ENCODE measurements at regions of chr13 and their contacts with region 1.

Region 1: GRCh38 chr13:48769107-48769704 is 115.5 kb downstream of the CYSLTR2 start:
- DNase-seq: peak; percentile 91
- ATAC-seq: peak; percentile 98
- H3K4me3 ChIP-seq: no peak overlapping the region
- H3K27ac ChIP-seq: no peak overlapping the region
- H3K4me1 ChIP-seq: peaks cover 8% of the 10 kb centered on the region
- H3K27me3 ChIP-seq: no peaks in the 10 kb centered on the region
- CTCF ChIP-seq: peak; percentile 100; the same call in 1 of the 2 replicates
- POLR2A ChIP-seq: 0 out of 2 replicates have a peak, but pooled peaks have one; percentile 50
- RAD21 ChIP-seq: peak; percentile 100

Region 2: GRCh38 chr13:48126944-48127830 is 642.0 kb before region 1 on chr13:
- CTCF ChIA-PET with region 1: interaction called, 4 read pairs
- POLR2A ChIA-PET with region 1: no interaction called
- dilution Hi-C with region 1: no loop called
- in situ Hi-C with region 1: no loop called
- intact Hi-C with region 1: loop called (anchors 2 kb)
- DNase-seq: peak; percentile 60
- ATAC-seq: peak; percentile 77
- H3K4me3 ChIP-seq: no peak overlapping the region
- H3K27ac ChIP-seq: no peak overlapping the region
- H3K4me1 ChIP-seq: peaks cover 2% of the 10 kb centered on the region; the same call in 1 of the 2 replicates
- H3K27me3 ChIP-seq: peaks cover 2% of the 10 kb centered on the region; the same call in 1 of the 2 replicates
- CTCF ChIP-seq: peak; percentile 73
- POLR2A ChIP-seq: no peak
- RAD21 ChIP-seq: peak; percentile 60

Region 3: GRCh38 chr13:48303359-48304142 is 465.7 kb before region 1 on chr13 and contains the start of gene RB1:
- CTCF ChIA-PET with region 1: no interaction called
- POLR2A ChIA-PET with region 1: no interaction called
- dilution Hi-C with region 1: no loop called
- in situ Hi-C with region 1: no loop called
- intact Hi-C with region 1: loop called (anchors 1 kb)
- DNase-seq: peak; percentile 87
- ATAC-seq: peak; percentile 92
- H3K4me3 ChIP-seq: peak within 1 kb of the TSS; percentile 59
- H3K27ac ChIP-seq: peak within 1 kb of the TSS; percentile 76
- H3K4me1 ChIP-seq: no peaks in the 10 kb centered on the region
- H3K27me3 ChIP-seq: no peaks in the 10 kb centered on the region
- CTCF ChIP-seq: no peak
- POLR2A ChIP-seq: peak; percentile 90
- RAD21 ChIP-seq: no peak
- total RNA-seq, gene RB1: 15.4 and 23.1 TPM in 2 replicates

Region 4: DNA sequence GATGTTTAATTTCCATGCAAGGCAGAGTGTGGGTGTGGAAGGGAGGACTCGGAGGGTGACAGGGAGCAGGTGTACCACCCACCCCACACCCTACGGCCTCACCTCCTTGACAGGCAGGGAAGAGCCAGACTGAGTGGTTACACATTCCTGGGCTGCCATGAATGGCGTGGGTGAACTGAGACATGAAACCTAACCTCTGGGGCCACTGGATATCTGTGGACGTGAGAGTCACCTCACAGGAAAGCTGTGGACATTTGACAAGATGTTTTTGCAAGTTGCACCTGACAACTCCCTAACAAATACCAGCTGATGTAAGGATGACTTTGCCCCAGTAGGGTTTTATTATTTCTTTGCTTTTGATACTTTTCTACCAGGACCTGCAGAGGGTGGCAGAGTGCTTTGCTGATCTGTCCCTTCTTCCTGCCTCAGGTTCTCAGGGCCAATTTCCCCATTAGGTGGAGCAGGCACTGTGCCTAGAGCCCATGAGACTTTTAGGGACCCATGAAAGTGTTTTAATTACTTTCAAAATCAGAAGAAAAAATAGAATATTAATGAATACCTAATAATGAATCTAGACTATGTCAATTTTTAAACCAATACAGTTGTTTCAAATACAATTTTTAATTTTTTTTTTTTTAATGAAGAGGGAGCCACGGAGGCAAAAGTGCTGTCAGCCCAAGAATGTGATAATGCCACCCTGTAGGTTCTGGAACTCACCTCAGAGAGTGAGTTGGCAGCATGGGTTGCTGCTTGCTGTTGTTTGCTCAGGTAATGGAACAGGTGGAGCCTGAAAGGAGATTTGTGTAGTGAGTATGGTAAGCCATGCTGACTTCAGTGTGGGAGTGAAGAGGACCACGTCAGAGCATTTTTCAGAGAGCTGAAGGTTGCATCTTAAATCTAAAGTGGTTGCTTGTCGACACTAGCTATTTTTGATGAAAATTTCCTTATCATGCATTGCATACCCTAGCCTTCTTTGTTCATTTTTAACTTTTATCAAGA is 173.5 kb before region 1 on chr13:
- CTCF ChIA-PET with region 1: interaction called, 5 read pairs
- POLR2A ChIA-PET with region 1: no interaction called
- dilution Hi-C with region 1: no loop called
- in situ Hi-C with region 1: loop called (anchors 5 kb)
- intact Hi-C with region 1: loop called (anchors 1 kb)
- DNase-seq: peak; percentile 70
- ATAC-seq: peak; percentile 93
- H3K4me3 ChIP-seq: no peak overlapping the region
- H3K27ac ChIP-seq: no peak overlapping the region
- H3K4me1 ChIP-seq: peaks cover 4% of the 10 kb centered on the region; the same call in 1 of the 2 replicates
- H3K27me3 ChIP-seq: no peaks in the 10 kb centered on the region; the same call in 1 of the 2 replicates
- CTCF ChIP-seq: peak; percentile 81
- POLR2A ChIP-seq: no peak
- RAD21 ChIP-seq: peak; percentile 81

Region 5: GRCh38 chr13:48731957-48732569 is 37.1 kb before region 1 on chr13:
- CTCF ChIA-PET with region 1: no interaction called
- POLR2A ChIA-PET with region 1: no interaction called
- dilution Hi-C with region 1: no loop called
- in situ Hi-C with region 1: no loop called
- intact Hi-C with region 1: no loop called
- DNase-seq: no peak
- ATAC-seq: no peak
- H3K4me3 ChIP-seq: no peak overlapping the region
- H3K27ac ChIP-seq: no peak overlapping the region
- H3K4me1 ChIP-seq: peaks cover 2% of the 10 kb centered on the region; the same call in 1 of the 2 replicates
- H3K27me3 ChIP-seq: peaks cover 2% of the 10 kb centered on the region; the same call in 1 of the 2 replicates
- CTCF ChIP-seq: 0 out of 2 replicates have a peak, but pooled peaks have one; percentile 27
- POLR2A ChIP-seq: no peak
- RAD21 ChIP-seq: no peak